Endothelial cell of umbilical vein (primary cell): ENCODE measurements at regions of chr13 and their contacts with region 1.

Region 1: DNA sequence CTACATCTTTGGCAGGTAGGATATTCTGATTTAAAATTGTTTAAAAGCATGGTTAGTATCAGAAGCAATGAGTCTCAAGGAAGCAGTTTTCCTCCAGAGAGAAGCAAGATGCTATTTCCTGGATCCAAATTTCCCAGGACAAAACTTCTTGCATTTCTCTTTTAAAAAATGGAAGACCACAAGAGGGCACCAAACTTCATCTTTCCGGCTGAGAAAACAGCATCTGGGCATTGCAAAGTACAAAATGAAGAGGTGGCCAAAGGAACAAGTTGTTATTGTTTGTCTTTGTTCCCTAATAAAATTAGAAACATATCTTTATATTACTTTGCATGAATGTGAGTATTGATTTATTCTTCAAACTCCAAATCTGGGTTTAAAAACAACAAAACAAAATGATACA is 60.0 kb upstream of the LRCH1 start:
- DNase-seq: peak; percentile 59
- H3K4me3 ChIP-seq: no peak overlapping the region
- H3K27ac ChIP-seq: no peak overlapping the region
- H3K4me1 ChIP-seq: no peaks in the 10 kb centered on the region
- H3K27me3 ChIP-seq: peaks cover 20% of the 10 kb centered on the region in 2 experiments
- CTCF ChIP-seq: peak; percentile 33
- POLR2A ChIP-seq: no peak

Region 2: GRCh38 chr13:46603165-46603603 is 110.2 kb after region 1 on chr13:
- CTCF ChIA-PET with region 1: no interaction called
- POLR2A ChIA-PET with region 1: no interaction called
- dilution Hi-C with region 1: no loop called
- intact Hi-C with region 1: loop called (anchors 5 kb)
- DNase-seq: peak; percentile 23
- H3K4me3 ChIP-seq: no peak overlapping the region
- H3K27ac ChIP-seq: no peak overlapping the region
- H3K4me1 ChIP-seq: peaks cover 21% of the 10 kb centered on the region
- H3K27me3 ChIP-seq: no peaks in the 10 kb centered on the region
- CTCF ChIP-seq: peak; percentile 12 to 14
- POLR2A ChIP-seq: no peak

Region 3: DNA sequence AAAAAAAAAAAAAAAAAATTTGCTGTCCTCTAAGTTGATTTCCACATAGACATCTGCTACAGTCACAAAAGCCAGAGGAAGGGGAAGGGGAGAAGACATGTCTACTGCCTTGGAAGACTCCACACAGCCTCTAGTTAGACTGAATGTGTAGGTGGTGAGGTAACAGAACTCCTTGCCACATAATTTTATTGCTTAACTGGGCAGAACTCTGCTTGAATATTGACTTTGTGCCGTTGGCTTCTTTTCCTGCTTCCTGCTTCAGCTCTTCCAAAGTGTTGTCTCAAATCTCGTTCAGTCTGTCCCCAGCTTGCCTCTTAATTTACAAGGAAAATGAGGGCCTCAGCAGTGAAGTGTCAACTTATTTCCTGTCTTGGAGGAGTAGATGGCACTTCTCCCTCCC is 266.9 kb after region 1 on chr13:
- CTCF ChIA-PET with region 1: interaction called, 3 read pairs
- POLR2A ChIA-PET with region 1: no interaction called
- dilution Hi-C with region 1: no loop called
- intact Hi-C with region 1: loop called (anchors 1 kb)
- DNase-seq: no peak
- H3K4me3 ChIP-seq: no peak overlapping the region
- H3K27ac ChIP-seq: no peak overlapping the region
- H3K4me1 ChIP-seq: no peaks in the 10 kb centered on the region
- H3K27me3 ChIP-seq: peaks cover 0 to 4% of the 10 kb centered on the region in 2 experiments
- CTCF ChIP-seq: no peak
- POLR2A ChIP-seq: no peak